ENCODE measurements at regions of chr5 and their contacts with region 1.

Region 1: DNA sequence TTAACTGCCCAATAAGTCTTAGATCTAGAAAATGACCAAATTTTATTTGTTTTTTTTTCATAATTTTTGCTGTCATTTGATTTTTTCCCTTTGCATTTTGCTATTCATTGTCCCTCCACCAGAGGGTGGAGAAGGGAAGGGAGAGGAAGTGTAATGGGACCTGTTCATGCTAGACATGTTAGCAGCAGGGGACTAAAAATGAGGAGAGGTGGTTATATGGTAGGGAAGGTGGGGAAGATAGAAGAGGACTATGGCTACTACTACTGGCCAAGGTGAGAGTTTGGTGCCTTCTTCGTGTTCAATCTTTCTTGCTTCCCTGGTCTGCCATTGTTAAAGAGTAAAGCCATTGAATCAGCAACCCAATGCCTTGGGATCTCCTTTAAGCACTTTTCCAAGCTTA is 6.4 kb downstream of the GRIA1 start:
- DNase-seq: no peak
- H3K4me3 ChIP-seq: no peak overlapping the region
- H3K27ac ChIP-seq: no peak overlapping the region
- H3K4me1 ChIP-seq: no peaks in the 10 kb centered on the region
- H3K27me3 ChIP-seq: peaks cover 33% of the 10 kb centered on the region
- CTCF ChIP-seq: peak; percentile 81

Region 2: GRCh38 chr5:153352685-153353219 is 144.1 kb before region 1 on chr5:
- intact Hi-C with region 1: no loop called
- DNase-seq: no peak
- H3K4me3 ChIP-seq: peak overlapping the region; percentile 21
- H3K27ac ChIP-seq: no peak overlapping the region
- H3K4me1 ChIP-seq: peaks cover 9% of the 10 kb centered on the region
- H3K27me3 ChIP-seq: peaks cover 67% of the 10 kb centered on the region
- CTCF ChIP-seq: no peak

Region 3: GRCh38 chr5:153711755-153712154 is 214.9 kb after region 1 on chr5:
- intact Hi-C with region 1: loop called (anchors 5 kb)
- DNase-seq: no peak
- H3K4me3 ChIP-seq: no peak overlapping the region
- H3K27ac ChIP-seq: no peak overlapping the region
- H3K4me1 ChIP-seq: no peaks in the 10 kb centered on the region
- H3K27me3 ChIP-seq: no peaks in the 10 kb centered on the region
- CTCF ChIP-seq: peak; percentile 52

Region 4: DNA sequence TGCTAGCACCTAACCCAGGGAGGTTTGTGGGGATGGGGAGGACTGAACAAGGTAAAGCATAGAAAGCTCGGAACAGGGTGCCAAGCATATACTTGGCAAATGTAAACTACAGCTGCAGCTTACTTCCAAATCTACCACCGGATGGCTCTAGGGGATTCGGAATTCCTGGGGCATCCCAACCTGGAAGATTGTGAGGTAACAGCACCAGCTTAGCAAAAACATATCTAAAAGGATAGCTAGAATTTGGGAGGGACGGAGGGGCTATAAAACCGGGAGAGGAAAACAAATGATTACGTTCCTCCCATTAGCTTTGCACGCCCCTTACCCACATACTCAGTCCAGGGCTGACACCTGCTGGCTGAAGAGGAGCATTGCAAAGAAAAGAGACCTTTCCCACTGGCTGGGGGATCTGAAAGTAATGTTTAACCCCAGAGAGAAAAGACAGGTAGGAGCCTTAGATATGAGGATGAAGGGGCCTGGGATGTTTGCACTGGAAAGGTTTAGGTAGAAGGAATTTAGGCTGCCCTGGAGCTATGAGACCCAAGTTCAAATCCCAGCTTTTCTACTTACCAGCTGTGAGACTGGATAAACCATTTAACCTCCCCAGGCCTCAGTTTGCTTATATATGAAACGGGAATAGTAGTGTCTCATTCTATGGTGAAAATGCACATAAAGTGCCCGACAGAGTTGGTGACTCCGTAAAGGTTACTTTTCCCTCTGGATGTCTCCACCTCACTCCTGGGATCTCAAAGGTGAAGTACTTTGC is 468.2 kb after region 1 on chr5:
- intact Hi-C with region 1: loop called (anchors 5 kb)
- DNase-seq: no peak
- H3K4me3 ChIP-seq: peak overlapping the region; percentile 30
- H3K27ac ChIP-seq: no peak overlapping the region
- H3K4me1 ChIP-seq: peaks cover 2% of the 10 kb centered on the region
- H3K27me3 ChIP-seq: no peaks in the 10 kb centered on the region
- CTCF ChIP-seq: peak; percentile 88